GM10248 (cell line): ENCODE measurements at regions of chr6 and their contacts with region 1.

Region 1: GRCh38 chr6:82182756-82183155 is 64.8 kb downstream of the IBTK start:
- DNase-seq: no peak
- CTCF ChIP-seq: no peak

Region 2: DNA sequence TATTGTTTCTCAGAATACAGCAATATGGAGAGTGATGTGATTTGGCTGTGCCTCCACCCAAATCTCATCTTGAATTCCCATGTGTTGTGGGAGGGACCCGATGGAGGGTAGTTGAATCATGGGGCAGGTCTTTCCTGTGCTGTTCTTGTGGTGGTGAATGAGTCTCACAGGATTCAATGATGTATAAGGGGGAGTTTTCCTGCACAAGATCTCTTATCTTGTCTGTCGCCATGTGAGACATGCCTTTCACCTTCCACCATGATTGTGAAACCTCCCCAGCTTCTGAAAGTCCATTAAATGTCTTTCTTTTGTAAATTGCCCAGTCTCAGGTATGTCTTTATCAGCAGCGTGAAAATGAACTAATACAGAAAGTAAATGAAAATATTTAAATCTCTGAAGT is 195.5 kb before region 1 on chr6:
- CTCF ChIA-PET with region 1: no interaction called
- POLR2A ChIA-PET with region 1: no interaction called
- DNase-seq: no peak
- CTCF ChIP-seq: no peak

Region 3: DNA sequence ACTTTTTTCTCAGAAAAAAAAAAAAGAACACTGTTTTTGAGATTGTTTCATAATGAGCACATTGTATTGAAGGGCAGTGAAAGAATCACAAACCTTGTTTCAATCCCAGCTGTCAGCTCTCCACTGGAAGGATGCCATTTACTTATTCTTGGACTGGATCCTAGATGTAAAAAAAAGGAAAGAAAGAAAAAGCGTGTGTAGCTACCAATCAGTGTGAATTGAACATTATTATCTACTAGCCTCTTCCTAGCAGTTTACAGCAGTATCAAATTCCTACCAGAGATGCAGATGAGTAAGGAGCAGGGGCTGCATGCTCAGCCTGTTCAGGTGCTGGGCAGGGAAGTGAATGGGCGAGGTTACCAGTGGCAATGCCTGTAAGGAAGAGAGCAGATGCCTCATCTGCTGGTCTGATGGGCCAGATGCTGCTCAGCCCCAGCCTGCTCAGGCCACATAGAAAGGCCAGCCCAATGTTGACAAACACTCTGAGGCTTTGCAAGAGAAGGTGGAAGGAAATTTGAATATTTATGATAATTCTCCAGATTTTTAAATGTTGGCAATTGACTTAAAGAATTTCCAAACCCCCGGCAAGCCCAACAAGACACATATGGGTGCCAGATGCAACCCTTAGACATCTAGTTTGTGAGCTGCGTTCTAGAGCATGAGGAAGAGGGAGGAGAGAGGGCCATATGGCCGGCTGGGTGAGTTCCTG is 124.8 kb before region 1 on chr6:
- CTCF ChIA-PET with region 1: no interaction called
- POLR2A ChIA-PET with region 1: no interaction called
- DNase-seq: no peak
- CTCF ChIP-seq: no peak

Region 4: GRCh38 chr6:82197784-82198183 is 15.0 kb after region 1 on chr6:
- CTCF ChIA-PET with region 1: interaction called, 11 read pairs
- POLR2A ChIA-PET with region 1: no interaction called
- DNase-seq: no peak
- CTCF ChIP-seq: no peak

Region 5: GRCh38 chr6:82205930-82206392 is 23.2 kb after region 1 on chr6:
- CTCF ChIA-PET with region 1: interaction called, 10 read pairs
- POLR2A ChIA-PET with region 1: no interaction called
- DNase-seq: no peak
- CTCF ChIP-seq: no peak